ENCODE measurements at regions of chr17 and their contacts with region 1.

Region 1: DNA sequence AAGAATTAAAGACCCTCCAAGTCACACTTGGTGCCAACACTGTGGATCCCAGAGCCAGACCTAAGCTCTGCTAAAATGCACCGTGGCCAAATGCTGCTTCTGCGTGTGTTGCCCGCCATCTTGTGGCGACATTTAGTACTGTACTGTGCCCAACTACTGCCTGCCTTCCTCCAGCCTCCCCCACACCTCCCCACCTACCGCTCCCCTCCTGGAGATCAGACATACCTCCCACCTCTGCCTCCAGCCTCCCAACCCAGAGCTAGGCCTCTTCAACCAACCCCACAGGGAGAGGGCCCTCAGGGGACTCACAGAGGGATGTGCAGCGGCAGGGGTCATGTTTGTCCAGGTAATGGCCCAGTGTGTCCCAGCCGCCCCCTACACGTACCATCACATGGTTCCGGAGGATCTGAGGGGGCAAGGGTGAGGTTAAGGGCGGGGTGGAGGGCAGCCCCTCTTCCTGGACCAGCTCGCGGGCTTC is 5.5 kb downstream of the GAS2L2 start:
- DNase-seq: peak; percentile 62 to 86 (median 80)
- ATAC-seq: peak; percentile 99
- H3K4me3 ChIP-seq: no peak overlapping the region
- H3K4me3 Mint-ChIP-seq: no peak overlapping the region
- H3K27ac ChIP-seq: no peak overlapping the region
- H3K27ac Mint-ChIP-seq: no peak overlapping the region
- H3K4me1 ChIP-seq: peaks cover 7% of the 10 kb centered on the region
- H3K4me1 Mint-ChIP-seq: peaks cover 7% of the 10 kb centered on the region
- H3K27me3 ChIP-seq: peaks cover 17% of the 10 kb centered on the region in 2 experiments
- H3K27me3 Mint-ChIP-seq: peaks cover 49% of the 10 kb centered on the region
- CTCF ChIP-seq: peak; percentile 84

Region 2: DNA sequence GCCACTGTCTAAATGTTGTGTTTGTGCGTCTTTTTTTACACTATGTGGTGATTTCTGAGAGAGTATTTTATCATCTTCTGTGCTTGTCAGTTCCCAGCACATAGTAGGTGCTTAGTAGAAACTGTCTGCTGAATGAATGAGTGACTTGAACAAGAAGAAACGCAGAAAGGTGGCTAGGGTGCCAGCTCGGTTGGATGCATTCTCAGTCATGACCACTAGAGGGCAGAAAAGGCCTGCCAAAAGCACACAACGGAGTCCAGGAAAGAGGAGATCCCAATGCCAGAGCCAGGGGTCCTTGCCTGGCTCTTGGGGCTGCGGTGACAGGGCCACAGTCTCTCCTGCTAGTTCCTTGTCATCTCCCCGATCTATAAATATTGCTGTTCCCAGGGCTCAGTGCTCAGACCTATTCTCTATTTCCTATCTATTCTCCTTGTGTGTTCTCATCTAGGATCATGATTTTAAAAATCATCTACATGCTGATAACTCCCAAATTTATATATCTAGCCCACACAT is 1327.3 kb before region 1 on chr17:
- CTCF ChIA-PET with region 1: no interaction called
- POLR2A ChIA-PET with region 1: no interaction called
- intact Hi-C with region 1: loop called in 1 of 2 experiments (anchors 1 kb)
- DNase-seq: peak; percentile 26 to 79 (median 67)
- ATAC-seq: peak; percentile 64
- H3K4me3 ChIP-seq: no peak overlapping the region
- H3K4me3 Mint-ChIP-seq: no peak overlapping the region
- H3K27ac ChIP-seq: no peak overlapping the region
- H3K27ac Mint-ChIP-seq: no peak overlapping the region
- H3K4me1 ChIP-seq: no peaks in the 10 kb centered on the region
- H3K4me1 Mint-ChIP-seq: no peaks in the 10 kb centered on the region
- H3K27me3 ChIP-seq: peaks cover 0 to 4% of the 10 kb centered on the region in 2 experiments
- H3K27me3 Mint-ChIP-seq: peaks cover 40% of the 10 kb centered on the region
- CTCF ChIP-seq: peak; percentile 96

Region 3: GRCh38 chr17:35119368-35120165 is 628.0 kb before region 1 on chr17 and contains the start of gene RAD51D:
- CTCF ChIA-PET with region 1: interaction called, 14 read pairs
- POLR2A ChIA-PET with region 1: no interaction called
- intact Hi-C with region 1: no loop called
- DNase-seq: peak; percentile 63 to 90 (median 76)
- ATAC-seq: peak; percentile 88
- H3K4me3 ChIP-seq: peak within 1 kb of the TSS; percentile 86 to 97
- H3K4me3 Mint-ChIP-seq: peak within 1 kb of the TSS; percentile 92
- H3K27ac ChIP-seq: peak within 1 kb of the TSS; percentile 74 to 79
- H3K27ac Mint-ChIP-seq: peak within 1 kb of the TSS; percentile 95
- H3K4me1 ChIP-seq: peaks cover 25% of the 10 kb centered on the region
- H3K4me1 Mint-ChIP-seq: peaks cover 43% of the 10 kb centered on the region
- H3K27me3 ChIP-seq: no peaks in the 10 kb centered on the region
- H3K27me3 Mint-ChIP-seq: no peaks in the 10 kb centered on the region
- CTCF ChIP-seq: peak; percentile 79
- total RNA-seq, gene RAD51D: 6.9 to 8.7 TPM

Region 4: DNA sequence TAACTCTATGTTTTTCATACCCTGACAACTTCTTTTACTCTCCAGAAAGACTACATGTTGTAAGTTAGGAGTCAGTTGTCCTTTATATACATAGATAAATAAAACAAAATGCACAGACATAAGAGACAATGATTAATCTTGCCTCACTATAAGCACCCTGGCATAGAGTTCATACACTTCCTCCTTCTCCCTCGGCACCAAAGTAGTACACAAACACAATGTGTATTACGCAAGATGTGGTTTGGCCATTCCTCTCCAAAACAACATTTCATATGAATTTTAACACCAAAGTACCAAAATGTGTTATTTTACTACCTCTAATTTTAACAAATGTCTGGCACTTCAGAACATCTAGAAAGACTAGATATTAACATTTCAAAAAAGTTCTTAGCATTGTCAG is 356.9 kb before region 1 on chr17:
- CTCF ChIA-PET with region 1: no interaction called
- POLR2A ChIA-PET with region 1: no interaction called
- intact Hi-C with region 1: no loop called
- DNase-seq: no peak
- ATAC-seq: no peak
- H3K4me3 ChIP-seq: no peak overlapping the region
- H3K4me3 Mint-ChIP-seq: no peak overlapping the region
- H3K27ac ChIP-seq: no peak overlapping the region
- H3K27ac Mint-ChIP-seq: no peak overlapping the region
- H3K4me1 ChIP-seq: no peaks in the 10 kb centered on the region
- H3K4me1 Mint-ChIP-seq: no peaks in the 10 kb centered on the region
- H3K27me3 ChIP-seq: no peaks in the 10 kb centered on the region
- H3K27me3 Mint-ChIP-seq: no peaks in the 10 kb centered on the region
- CTCF ChIP-seq: no peak

Region 5: GRCh38 chr17:35448214-35448898 is 299.2 kb before region 1 on chr17 and contains the start of gene SLFN13:
- CTCF ChIA-PET with region 1: no interaction called
- POLR2A ChIA-PET with region 1: no interaction called
- intact Hi-C with region 1: no loop called
- DNase-seq: peak; percentile 58 to 93 (median 84)
- ATAC-seq: peak; percentile 90
- H3K4me3 ChIP-seq: peak within 1 kb of the TSS; percentile 57 to 70
- H3K4me3 Mint-ChIP-seq: peak within 1 kb of the TSS; percentile 87
- H3K27ac ChIP-seq: peak within 1 kb of the TSS; percentile 51 to 58
- H3K27ac Mint-ChIP-seq: peak within 1 kb of the TSS; percentile 93
- H3K4me1 ChIP-seq: peaks cover 16% of the 10 kb centered on the region
- H3K4me1 Mint-ChIP-seq: peaks cover 19% of the 10 kb centered on the region
- H3K27me3 ChIP-seq: no peaks in the 10 kb centered on the region
- H3K27me3 Mint-ChIP-seq: no peaks in the 10 kb centered on the region
- CTCF ChIP-seq: no peak
- total RNA-seq, gene SLFN13: 16.1 to 17.3 TPM

Region 6: GRCh38 chr17:35540589-35541404 is 206.8 kb before region 1 on chr17:
- CTCF ChIA-PET with region 1: interaction called, 8 read pairs
- POLR2A ChIA-PET with region 1: no interaction called
- intact Hi-C with region 1: loop called in 1 of 2 experiments (anchors 1 kb)
- DNase-seq: peak in 7 of 9 experiments; percentile 17 to 76 (median 47)
- ATAC-seq: peak; percentile 34
- H3K4me3 ChIP-seq: peak overlapping the region; percentile 56 to 59
- H3K4me3 Mint-ChIP-seq: peak overlapping the region; percentile 88
- H3K27ac ChIP-seq: peak overlapping the region; percentile 63 to 89
- H3K27ac Mint-ChIP-seq: peak overlapping the region; percentile 93
- H3K4me1 ChIP-seq: peaks cover 31% of the 10 kb centered on the region
- H3K4me1 Mint-ChIP-seq: peaks cover 49% of the 10 kb centered on the region
- H3K27me3 ChIP-seq: no peaks in the 10 kb centered on the region
- H3K27me3 Mint-ChIP-seq: no peaks in the 10 kb centered on the region
- CTCF ChIP-seq: no peak

Region 7: DNA sequence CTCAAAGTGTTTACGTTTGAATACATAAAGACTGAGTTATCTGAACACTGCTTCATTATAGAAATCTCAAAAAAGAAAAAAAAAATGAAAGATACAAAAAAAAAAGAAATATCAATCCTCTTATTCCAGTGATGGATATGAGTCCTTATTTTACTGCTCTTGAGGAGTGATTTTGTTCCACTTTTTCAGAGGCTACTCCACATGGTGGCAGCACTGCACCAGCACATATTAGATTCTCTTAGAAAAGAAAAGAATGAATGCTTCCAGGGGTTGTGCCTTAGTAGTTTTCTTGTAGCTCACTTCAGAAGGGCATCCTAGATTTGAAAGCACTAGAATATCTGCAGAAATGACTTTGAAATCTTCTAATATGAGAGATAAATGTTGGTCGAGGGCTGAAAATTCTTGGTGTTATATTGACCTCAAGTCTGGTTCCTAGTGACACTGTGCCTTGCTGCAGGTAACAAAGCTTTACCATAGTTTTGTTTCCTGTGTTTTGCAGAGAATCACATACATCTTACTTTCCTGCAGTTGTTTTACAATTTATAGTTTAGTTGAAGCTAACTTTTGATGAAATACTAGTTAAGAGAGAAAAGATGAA is 134.6 kb before region 1 on chr17:
- CTCF ChIA-PET with region 1: interaction called, 69 read pairs
- POLR2A ChIA-PET with region 1: interaction called, 3 read pairs
- intact Hi-C with region 1: loop called in 1 of 2 experiments (anchors 1 kb)
- DNase-seq: peak in 5 of 9 experiments; percentile 28 to 49 (median 34)
- ATAC-seq: peak; percentile 38
- H3K4me3 ChIP-seq: no peak overlapping the region
- H3K4me3 Mint-ChIP-seq: no peak overlapping the region
- H3K27ac ChIP-seq: no peak overlapping the region
- H3K27ac Mint-ChIP-seq: no peak overlapping the region
- H3K4me1 ChIP-seq: no peaks in the 10 kb centered on the region
- H3K4me1 Mint-ChIP-seq: peaks cover 5% of the 10 kb centered on the region
- H3K27me3 ChIP-seq: no peaks in the 10 kb centered on the region
- H3K27me3 Mint-ChIP-seq: no peaks in the 10 kb centered on the region
- CTCF ChIP-seq: peak; percentile 55